ENCODE measurements at regions of chr1 and their contacts with region 1.

Region 1: DNA sequence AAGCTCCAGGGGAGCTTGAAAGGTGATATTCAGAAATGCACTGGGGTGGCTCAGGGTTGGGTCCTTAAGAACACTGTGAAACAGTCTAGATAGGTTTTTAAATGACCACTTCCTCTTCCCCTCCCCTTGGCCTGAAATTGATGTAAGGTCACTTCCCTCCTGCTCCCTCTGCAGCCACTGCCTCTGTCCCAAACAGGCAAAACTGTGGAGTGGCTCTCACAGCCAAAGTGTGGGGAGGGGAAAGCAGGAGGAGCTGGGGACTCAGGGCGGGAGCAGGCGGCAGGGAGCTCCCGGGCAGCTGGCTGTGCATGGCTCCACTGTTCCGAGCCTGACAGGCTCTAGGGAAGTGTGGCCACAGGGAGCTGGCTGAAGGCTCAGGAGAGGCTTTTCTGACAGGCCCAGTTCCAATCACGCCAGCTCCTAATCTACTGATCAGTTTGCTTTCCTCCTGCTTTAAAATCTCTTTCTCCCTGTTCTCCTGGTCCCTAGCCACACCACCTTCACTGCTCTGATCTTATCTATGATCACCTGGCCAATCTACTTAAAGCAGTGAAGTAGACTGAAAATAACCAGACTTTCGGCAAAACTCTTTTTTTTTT is 5.1 kb upstream of the CSRP1 start:
- DNase-seq: peak; percentile 65
- CTCF ChIP-seq: no peak

Region 2: GRCh38 chr1:201408176-201408833 is 103.7 kb before region 1 on chr1:
- CTCF ChIA-PET with region 1: interaction called, 23 read pairs
- POLR2A ChIA-PET with region 1: no interaction called
- DNase-seq: peak; percentile 85
- CTCF ChIP-seq: peak; percentile 95

Region 3: GRCh38 chr1:201447911-201448871 is 63.8 kb before region 1 on chr1:
- CTCF ChIA-PET with region 1: interaction called, 174 read pairs
- POLR2A ChIA-PET with region 1: no interaction called
- DNase-seq: peak; percentile 89
- CTCF ChIP-seq: peak; percentile 80

Region 4: DNA sequence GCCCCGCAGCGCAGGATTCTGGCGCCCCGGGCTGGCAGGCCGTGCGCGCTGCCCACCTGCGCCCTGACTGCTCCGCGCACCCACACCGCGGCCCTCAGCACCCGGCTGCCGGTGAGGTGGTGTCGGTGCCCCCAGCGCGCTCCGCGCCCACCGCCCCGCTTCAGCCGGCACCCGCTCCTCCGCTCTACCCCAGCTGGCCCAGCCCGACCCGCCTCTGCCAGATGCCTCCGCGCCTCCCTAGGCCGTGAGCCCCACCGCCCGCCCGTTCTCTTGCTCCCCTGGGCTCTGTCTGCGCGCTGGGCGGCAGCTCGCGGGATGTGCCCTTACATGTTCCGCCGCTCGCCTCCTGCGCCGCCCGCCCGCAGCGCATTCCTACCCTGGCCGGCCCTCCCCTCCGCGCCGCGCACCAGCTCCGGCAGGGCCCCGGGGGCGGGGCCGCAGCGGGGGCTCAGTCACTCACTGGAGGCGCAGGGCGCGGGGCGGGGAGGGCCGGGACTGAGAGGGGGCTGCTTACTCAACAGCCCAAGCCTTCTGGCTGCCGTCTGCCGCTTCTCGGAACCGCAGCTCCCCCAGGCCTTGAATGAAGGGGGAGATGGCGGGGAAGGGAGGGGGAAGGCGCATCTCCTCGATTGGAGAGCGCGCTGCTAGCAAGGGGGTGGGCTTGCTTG is 43.1 kb before region 1 on chr1 and contains the start of gene PHLDA3:
- CTCF ChIA-PET with region 1: interaction called, 41 read pairs
- POLR2A ChIA-PET with region 1: no interaction called
- DNase-seq: peak; percentile 81
- CTCF ChIP-seq: no peak

Region 5: GRCh38 chr1:201538612-201539551 is 26.8 kb after region 1 on chr1 and contains the start of gene NAV1:
- CTCF ChIA-PET with region 1: interaction called, 157 read pairs
- POLR2A ChIA-PET with region 1: no interaction called
- DNase-seq: peak; percentile 19
- CTCF ChIP-seq: no peak

Region 6: GRCh38 chr1:201739492-201740085 is 227.5 kb after region 1 on chr1:
- CTCF ChIA-PET with region 1: no interaction called
- POLR2A ChIA-PET with region 1: no interaction called
- DNase-seq: peak; percentile 45
- CTCF ChIP-seq: no peak